Activated CD4-positive, alpha-beta memory T cell treated with anti-CD3 and anti-CD28 coated beads for 36 hours (primary cell): ENCODE measurements at regions of chr15 and their contacts with region 1.

Region 1: GRCh38 chr15:67240235-67241131 is 14.0 kb downstream of the AAGAB start:
- DNase-seq: peak; percentile 40
- H3K4me3 Mint-ChIP-seq: peak overlapping the region; percentile 58
- H3K27ac Mint-ChIP-seq: peak overlapping the region; percentile 92
- H3K4me1 Mint-ChIP-seq: peaks cover 48% of the 10 kb centered on the region
- H3K27me3 Mint-ChIP-seq: no peaks in the 10 kb centered on the region

Region 2: GRCh38 chr15:67065444-67066093 is 174.9 kb before region 1 on chr15 and contains the start of gene SMAD3:
- CTCF ChIA-PET with region 1: interaction called, 3 read pairs
- POLR2A ChIA-PET with region 1: no interaction called
- intact Hi-C with region 1: loop called (anchors 2 kb)
- DNase-seq: peak; percentile 86
- H3K4me3 Mint-ChIP-seq: peak within 1 kb of the TSS; percentile 95
- H3K27ac Mint-ChIP-seq: peak within 1 kb of the TSS; percentile 90
- H3K4me1 Mint-ChIP-seq: peaks cover 41% of the 10 kb centered on the region
- H3K27me3 Mint-ChIP-seq: peaks cover 10% of the 10 kb centered on the region
- total RNA-seq, gene SMAD3: 50.2 to 50.5 TPM

Region 3: DNA sequence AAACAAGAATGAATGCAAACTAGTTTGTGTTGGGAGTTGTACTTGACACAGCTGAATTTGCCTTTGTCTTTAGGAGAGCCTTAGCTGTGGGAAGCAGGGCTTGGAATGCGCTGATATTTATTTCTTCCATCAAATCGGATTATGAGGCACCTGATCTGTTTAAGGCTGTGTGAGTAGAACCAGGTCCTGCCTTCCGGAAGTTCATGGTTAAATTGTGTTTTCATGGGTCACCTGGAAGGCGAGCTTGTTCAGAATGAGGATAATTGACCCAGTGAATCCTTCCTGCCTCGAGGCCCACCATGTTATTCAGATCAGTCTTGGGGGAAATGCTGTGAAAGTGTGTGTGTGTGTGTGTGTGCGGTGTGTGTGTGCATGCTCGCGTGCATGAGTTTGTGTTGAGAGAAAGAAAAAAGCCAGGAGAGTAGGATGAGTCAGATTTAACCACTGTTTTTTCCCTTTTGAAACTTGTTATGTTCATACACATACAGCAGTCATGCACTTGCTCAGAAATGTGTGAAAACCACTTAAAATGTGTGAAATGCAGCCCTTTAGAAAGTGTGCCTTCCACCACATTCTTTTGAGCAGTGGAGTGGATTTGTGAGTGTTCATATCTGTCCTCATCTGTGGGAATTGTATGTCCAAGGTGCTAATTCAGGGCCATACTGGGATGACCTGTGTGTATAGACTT is 138.4 kb before region 1 on chr15:
- CTCF ChIA-PET with region 1: interaction called, 13 read pairs
- POLR2A ChIA-PET with region 1: interaction called, 21 read pairs
- intact Hi-C with region 1: loop called (anchors 1 kb)
- DNase-seq: peak; percentile 80
- H3K4me3 Mint-ChIP-seq: no peak overlapping the region
- H3K27ac Mint-ChIP-seq: no peak overlapping the region
- H3K4me1 Mint-ChIP-seq: peaks cover 28% of the 10 kb centered on the region
- H3K27me3 Mint-ChIP-seq: no peaks in the 10 kb centered on the region

Region 4: DNA sequence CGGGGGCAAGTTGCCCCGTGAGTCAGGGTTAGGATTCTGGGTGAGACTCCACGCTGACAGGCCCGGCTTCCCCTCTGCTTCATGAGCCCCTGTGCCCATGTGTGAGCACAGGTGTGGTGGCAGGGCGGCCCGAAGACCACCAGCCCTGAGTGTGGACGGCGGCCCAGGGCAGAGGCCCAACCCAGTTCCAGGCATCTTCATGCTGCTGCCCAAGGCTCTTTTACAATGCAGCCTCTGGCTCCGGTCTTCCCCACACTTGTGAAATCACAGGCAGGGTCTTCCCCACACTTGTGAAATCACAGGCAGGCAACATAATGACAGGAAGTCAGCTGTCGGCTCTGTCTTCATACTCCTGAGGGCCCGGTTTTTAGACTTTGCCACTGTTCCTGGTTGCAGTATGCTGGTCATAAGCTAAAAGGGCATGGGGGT is 64.8 kb before region 1 on chr15:
- CTCF ChIA-PET with region 1: interaction called, 4 read pairs
- POLR2A ChIA-PET with region 1: no interaction called
- intact Hi-C with region 1: loop called (anchors 1 kb)
- DNase-seq: peak; percentile 77
- H3K4me3 Mint-ChIP-seq: no peak overlapping the region
- H3K27ac Mint-ChIP-seq: peak overlapping the region; percentile 79
- H3K4me1 Mint-ChIP-seq: peaks cover 65% of the 10 kb centered on the region
- H3K27me3 Mint-ChIP-seq: no peaks in the 10 kb centered on the region

Region 5: GRCh38 chr15:67196672-67197363 is 43.7 kb before region 1 on chr15:
- CTCF ChIA-PET with region 1: no interaction called
- POLR2A ChIA-PET with region 1: no interaction called
- intact Hi-C with region 1: no loop called
- DNase-seq: no peak
- H3K4me3 Mint-ChIP-seq: no peak overlapping the region
- H3K27ac Mint-ChIP-seq: peak overlapping the region; percentile 55
- H3K4me1 Mint-ChIP-seq: peaks cover 16% of the 10 kb centered on the region
- H3K27me3 Mint-ChIP-seq: no peaks in the 10 kb centered on the region

Region 6: GRCh38 chr15:67319961-67320360 is 79.5 kb after region 1 on chr15:
- CTCF ChIA-PET with region 1: no interaction called
- POLR2A ChIA-PET with region 1: no interaction called
- intact Hi-C with region 1: no loop called
- DNase-seq: no peak
- H3K4me3 Mint-ChIP-seq: no peak overlapping the region
- H3K27ac Mint-ChIP-seq: no peak overlapping the region
- H3K4me1 Mint-ChIP-seq: no peaks in the 10 kb centered on the region
- H3K27me3 Mint-ChIP-seq: peaks cover 2% of the 10 kb centered on the region

Region 7: GRCh38 chr15:67433495-67434099 is 193.1 kb after region 1 on chr15:
- CTCF ChIA-PET with region 1: interaction called, 13 read pairs
- POLR2A ChIA-PET with region 1: no interaction called
- intact Hi-C with region 1: no loop called
- DNase-seq: peak; percentile 50
- H3K4me3 Mint-ChIP-seq: no peak overlapping the region
- H3K27ac Mint-ChIP-seq: no peak overlapping the region
- H3K4me1 Mint-ChIP-seq: no peaks in the 10 kb centered on the region
- H3K27me3 Mint-ChIP-seq: no peaks in the 10 kb centered on the region